ENCODE measurements at regions of chr20 and their contacts with region 1.

Region 1: GRCh38 chr20:39264506-39265172 is 302.5 kb downstream of the DHX35 start:
- DNase-seq: no peak
- ATAC-seq: peak; percentile 67

Region 2: GRCh38 chr20:38805502-38805957 is 459.1 kb before region 1 on chr20 and contains the start of gene PPP1R16B:
- intact Hi-C with region 1: no loop called
- DNase-seq: peak; percentile 75
- ATAC-seq: peak; percentile 72
- total RNA-seq, gene PPP1R16B: 9.0 TPM

Region 3: DNA sequence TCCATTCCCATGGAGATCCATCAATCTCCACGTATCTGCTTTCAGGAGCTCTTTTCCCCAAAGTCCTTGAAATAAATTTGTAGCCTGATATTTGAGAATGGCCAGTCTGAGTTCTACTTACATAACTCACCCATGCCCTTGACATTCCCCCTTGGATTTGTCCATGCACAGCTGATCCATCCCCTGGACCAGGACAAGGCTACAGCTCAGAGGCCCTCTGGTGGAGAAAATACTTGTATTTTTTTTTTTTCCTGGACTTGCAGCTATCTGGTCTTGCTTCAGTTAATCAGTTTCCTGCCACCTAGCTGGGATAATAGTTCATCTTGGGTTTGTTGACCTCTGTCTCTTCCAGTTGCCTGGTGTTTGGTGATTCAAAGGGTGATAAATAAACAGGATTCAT is 165.1 kb after region 1 on chr20:
- intact Hi-C with region 1: loop called (anchors 10 kb)
- DNase-seq: no peak
- ATAC-seq: peak; percentile 56

Region 4: GRCh38 chr20:39607141-39607540 is 342.5 kb after region 1 on chr20:
- intact Hi-C with region 1: no loop called
- DNase-seq: no peak
- ATAC-seq: no peak

Region 5: GRCh38 chr20:39874049-39874888 is 609.6 kb after region 1 on chr20:
- intact Hi-C with region 1: loop called (anchors 5 kb)
- DNase-seq: peak; percentile 79
- ATAC-seq: peak; percentile 93

Measured in Right ventricle myocardium inferior (tissue), 1 donor.